Posterior vena cava (tissue), 2 donors: ENCODE measurements at regions of chr4 and their contacts with region 1.

Region 1: DNA sequence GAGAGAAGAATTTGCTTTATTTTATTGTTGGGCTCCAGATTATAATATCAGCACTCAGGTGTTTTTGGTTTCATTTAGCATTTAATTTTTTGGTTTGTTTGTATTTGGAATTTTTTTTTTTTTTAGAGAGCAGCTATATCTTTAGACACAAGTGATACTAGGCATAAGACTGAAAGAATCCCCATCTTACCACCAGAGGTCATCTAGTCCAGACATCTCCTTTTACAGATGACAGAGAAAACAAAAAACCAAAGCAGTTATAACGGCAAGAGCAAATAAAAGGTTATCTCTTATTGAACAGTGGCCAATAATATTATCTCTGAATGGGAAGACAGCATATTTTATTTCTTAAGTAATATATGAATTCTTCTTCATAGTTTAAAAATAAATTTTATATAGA is 22.8 kb downstream of the USP38 start:
- DNase-seq: no peak

Region 2: GRCh38 chr4:143335979-143336780 is 128.6 kb after region 1 on chr4:
- intact Hi-C with region 1: loop called in 1 of 2 experiments (anchors 5 kb)
- DNase-seq: peak; percentile 96

Region 3: GRCh38 chr4:143482840-143483239 is 275.3 kb after region 1 on chr4:
- intact Hi-C with region 1: loop called (anchors 10 kb)
- DNase-seq: no peak